ENCODE measurements at regions of chr6 and their contacts with region 1.

Region 1: GRCh38 chr6:138001750-138002349 is 105.4 kb downstream of the PERP start:
- DNase-seq: peak; percentile 36
- H3K4me3 ChIP-seq: no peak overlapping the region
- H3K27ac ChIP-seq: no peak overlapping the region
- H3K27me3 ChIP-seq: no peaks in the 10 kb centered on the region
- CTCF ChIP-seq: peak; percentile 93

Region 2: GRCh38 chr6:136945711-136946121 is 1056.1 kb before region 1 on chr6:
- CTCF ChIA-PET with region 1: no interaction called
- POLR2A ChIA-PET with region 1: no interaction called
- DNase-seq: no peak
- H3K4me3 ChIP-seq: no peak overlapping the region
- H3K27ac ChIP-seq: no peak overlapping the region
- H3K27me3 ChIP-seq: peaks cover 4% of the 10 kb centered on the region
- CTCF ChIP-seq: no peak

Region 3: DNA sequence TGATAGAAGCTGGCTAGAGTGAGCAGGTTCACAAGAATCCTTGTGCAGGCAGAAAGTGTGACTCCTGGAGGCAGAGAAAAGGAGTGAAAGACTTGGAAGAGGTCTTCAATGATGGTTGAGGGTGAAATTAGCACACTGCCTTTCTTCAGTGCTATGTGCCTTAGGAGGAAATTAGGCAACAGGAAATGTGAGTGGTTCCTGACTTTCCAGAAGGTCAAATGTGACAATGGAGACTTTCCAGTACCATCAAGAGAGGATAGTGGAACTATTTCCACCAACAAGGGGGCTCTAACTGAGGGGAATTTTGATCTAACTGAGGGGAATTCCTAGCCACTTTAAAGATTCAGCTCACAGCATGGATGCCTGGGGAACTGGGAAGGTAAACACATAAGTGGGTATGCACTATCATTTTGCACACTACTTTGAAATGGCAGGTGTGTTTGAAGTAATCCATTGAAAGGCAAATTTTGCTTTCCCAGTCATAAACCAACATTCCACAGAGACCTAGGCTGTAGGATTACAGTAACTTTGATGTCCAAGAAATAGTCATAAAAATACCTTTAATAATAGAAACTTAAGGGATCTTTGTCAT is 15.4 kb after region 1 on chr6:
- CTCF ChIA-PET with region 1: interaction called, 22 read pairs
- POLR2A ChIA-PET with region 1: no interaction called
- DNase-seq: no peak
- H3K4me3 ChIP-seq: no peak overlapping the region
- H3K27ac ChIP-seq: no peak overlapping the region
- H3K27me3 ChIP-seq: no peaks in the 10 kb centered on the region
- CTCF ChIP-seq: no peak

Region 4: DNA sequence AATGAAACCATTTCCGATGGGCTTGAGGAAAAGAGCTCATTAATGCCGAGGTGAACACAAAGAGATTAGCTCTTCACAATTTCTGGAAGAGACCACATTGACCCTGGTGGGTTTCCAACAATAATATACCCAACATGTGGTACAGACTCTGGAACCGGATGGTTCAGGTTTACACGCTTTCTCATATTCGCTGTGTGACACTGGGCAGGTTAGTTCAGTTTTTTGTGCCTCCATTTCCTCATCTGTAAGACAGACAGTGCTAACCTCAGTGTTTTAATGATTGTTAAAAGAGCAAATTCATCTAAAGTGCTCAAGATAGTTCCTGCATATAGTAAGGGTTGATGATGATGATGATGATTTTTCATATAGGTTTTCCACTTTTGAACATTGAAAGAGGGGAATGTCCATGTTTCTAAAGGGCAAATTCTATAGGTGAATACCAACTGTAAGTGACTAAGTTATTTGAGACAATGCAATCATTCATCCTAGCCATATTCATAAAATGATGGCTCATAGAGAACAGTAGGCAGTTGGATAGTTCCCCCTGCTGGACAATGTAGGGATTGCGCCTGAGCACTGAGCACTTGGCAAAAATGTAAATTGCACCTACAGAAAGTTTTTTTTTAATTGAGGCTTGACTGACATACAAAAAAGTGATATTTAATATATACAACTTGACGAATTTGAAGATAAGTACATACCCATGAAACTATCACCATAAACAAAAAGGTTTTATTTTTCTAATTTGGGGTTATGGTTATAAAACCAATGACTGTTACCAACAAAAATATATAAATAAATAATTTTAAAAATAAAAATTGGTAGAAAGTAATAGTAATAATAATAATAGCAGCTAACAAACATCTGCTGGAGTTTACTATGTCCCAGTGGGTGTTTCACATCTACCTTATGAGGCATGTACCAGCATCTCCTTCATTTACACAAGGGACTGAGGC is 107.5 kb after region 1 on chr6:
- CTCF ChIA-PET with region 1: interaction called, 250 read pairs
- POLR2A ChIA-PET with region 1: interaction called, 4 read pairs
- DNase-seq: peak; percentile 13
- H3K4me3 ChIP-seq: no peak overlapping the region
- H3K27ac ChIP-seq: no peak overlapping the region
- H3K27me3 ChIP-seq: peaks cover 18% of the 10 kb centered on the region
- CTCF ChIP-seq: peak; percentile 98

Measured in AG04450 (cell line).